ENCODE measurements at regions of chr6 and their contacts with region 1.

Region 1: DNA sequence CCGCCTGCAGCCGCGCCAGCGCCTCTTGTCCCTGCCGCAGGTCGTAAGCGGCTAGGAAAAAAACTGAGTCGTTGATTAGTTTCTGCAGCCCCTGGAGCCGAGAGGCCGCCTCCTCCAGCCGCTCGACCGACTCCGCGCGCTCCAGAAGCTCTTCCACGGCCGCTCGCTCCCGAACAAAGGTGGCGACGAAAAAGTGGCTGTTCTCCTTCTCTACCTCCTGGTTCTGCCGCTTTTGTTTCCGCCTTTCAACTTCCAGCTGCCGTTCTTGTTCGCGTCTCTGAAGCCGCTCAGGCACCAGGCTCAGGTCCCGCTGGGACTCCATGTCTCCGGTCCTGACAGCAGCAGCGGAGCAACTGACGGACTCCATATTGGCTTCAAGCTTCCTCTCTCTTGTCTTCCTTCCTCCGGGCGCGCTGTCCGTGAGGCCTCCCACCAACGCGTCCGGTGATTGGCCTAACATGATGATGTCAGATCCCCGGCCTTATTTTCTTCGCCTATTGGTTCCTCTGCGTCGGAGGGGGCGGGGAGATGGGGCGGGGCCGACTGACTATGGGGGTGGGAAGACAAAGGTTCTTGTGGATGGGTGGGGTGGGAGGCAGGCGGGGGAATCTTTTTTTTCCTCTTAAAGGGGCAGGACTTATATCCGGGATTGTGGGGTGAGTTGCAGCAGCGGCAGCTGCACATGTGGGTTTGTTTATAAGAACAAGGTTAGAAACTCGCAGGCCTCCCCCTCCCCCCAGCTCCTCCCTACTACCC is at the start of gene TBCC:
- DNase-seq: peak; percentile 87 to 98 (median 93)
- ATAC-seq: peak; percentile 82
- H3K4me3 ChIP-seq: peak within 1 kb of the TSS; percentile 76 to 84
- H3K4me3 Mint-ChIP-seq: peak within 1 kb of the TSS; percentile 100
- H3K27ac ChIP-seq: peak within 1 kb of the TSS; percentile 86 to 89
- H3K27ac Mint-ChIP-seq: peak within 1 kb of the TSS; percentile 100
- H3K4me1 ChIP-seq: peaks cover 36% of the 10 kb centered on the region
- H3K4me1 Mint-ChIP-seq: peaks cover 27% of the 10 kb centered on the region
- H3K27me3 ChIP-seq: no peaks in the 10 kb centered on the region
- H3K27me3 Mint-ChIP-seq: no peaks in the 10 kb centered on the region
- CTCF ChIP-seq: no peak
- total RNA-seq, gene TBCC: 70.5 to 74.1 TPM

Region 2: GRCh38 chr6:42692137-42692911 is 53.6 kb before region 1 on chr6:
- CTCF ChIA-PET with region 1: interaction called, 3 read pairs
- POLR2A ChIA-PET with region 1: interaction called, 10 read pairs
- intact Hi-C with region 1: no loop called
- DNase-seq: peak in 1 of 9 experiments; percentile 24
- ATAC-seq: peak; percentile 14
- H3K4me3 ChIP-seq: no peak overlapping the region
- H3K4me3 Mint-ChIP-seq: no peak overlapping the region
- H3K27ac ChIP-seq: peak overlapping the region in 1 of 2 experiments; percentile 38
- H3K27ac Mint-ChIP-seq: peak overlapping the region; percentile 91
- H3K4me1 ChIP-seq: peaks cover 39% of the 10 kb centered on the region
- H3K4me1 Mint-ChIP-seq: peaks cover 45% of the 10 kb centered on the region
- H3K27me3 ChIP-seq: no peaks in the 10 kb centered on the region
- H3K27me3 Mint-ChIP-seq: no peaks in the 10 kb centered on the region
- CTCF ChIP-seq: no peak

Region 3: DNA sequence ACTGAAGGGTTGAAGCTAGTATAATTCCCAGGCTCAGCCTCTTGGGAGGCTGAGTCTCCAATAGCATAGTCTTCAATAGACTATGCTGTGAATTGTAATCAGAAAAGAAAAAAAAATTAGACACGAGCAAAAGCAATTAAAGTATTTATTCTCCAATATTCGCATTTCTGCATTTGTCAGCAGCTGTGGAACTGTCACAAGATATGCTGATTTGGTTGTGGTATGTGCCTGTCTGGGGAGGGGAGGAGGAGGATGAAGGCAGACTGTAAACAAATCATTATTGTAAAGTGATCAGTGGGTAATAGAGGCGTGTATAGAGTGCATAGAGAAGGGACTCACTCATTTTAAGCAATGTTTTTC is 25.8 kb after region 1 on chr6:
- CTCF ChIA-PET with region 1: interaction called, 27 read pairs
- POLR2A ChIA-PET with region 1: interaction called, 312 read pairs
- intact Hi-C with region 1: loop called (anchors 1 kb)
- DNase-seq: peak in 5 of 9 experiments; percentile 34 to 83 (median 57)
- ATAC-seq: peak; percentile 21
- H3K4me3 ChIP-seq: peak overlapping the region; percentile 22 to 24
- H3K4me3 Mint-ChIP-seq: peak overlapping the region; percentile 70
- H3K27ac ChIP-seq: peak overlapping the region; percentile 81 to 98
- H3K27ac Mint-ChIP-seq: peak overlapping the region; percentile 100
- H3K4me1 ChIP-seq: peaks cover 67% of the 10 kb centered on the region
- H3K4me1 Mint-ChIP-seq: peaks cover 72% of the 10 kb centered on the region
- H3K27me3 ChIP-seq: no peaks in the 10 kb centered on the region
- H3K27me3 Mint-ChIP-seq: no peaks in the 10 kb centered on the region
- CTCF ChIP-seq: no peak

Region 4: DNA sequence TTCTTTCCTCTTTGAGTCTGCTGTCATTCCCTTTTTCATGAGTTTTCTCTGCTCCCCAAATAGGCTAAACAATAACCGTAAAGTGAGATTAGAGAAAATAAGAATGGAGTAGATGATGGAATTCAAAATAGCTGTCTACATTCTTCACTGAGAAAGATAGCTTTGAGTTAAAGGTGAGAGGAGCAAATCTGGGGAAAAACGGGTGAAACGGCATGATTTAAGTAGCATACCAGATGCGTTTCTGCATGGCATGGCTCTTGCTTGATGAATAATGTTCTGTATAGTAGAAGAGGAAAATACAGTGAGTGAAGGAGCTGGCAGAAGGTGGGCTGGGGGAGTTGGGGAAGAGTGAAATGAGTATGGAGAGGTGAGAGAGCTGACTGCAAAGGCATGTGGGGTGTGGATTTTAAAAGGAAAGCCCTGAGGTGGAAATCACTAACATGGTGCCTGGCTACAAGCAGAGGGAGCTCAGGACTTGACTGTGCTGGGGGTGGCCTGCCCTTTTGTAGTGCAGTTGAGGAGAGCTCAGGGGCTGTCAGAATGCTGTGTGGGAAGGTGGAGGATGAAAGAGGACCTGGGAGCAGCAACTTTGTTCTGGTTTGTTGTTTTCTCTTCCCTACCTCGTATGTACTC is 44.8 kb after region 1 on chr6:
- CTCF ChIA-PET with region 1: interaction called, 3 read pairs
- POLR2A ChIA-PET with region 1: interaction called, 372 read pairs
- intact Hi-C with region 1: no loop called
- DNase-seq: peak in 1 of 9 experiments; percentile 45
- ATAC-seq: no peak
- H3K4me3 ChIP-seq: no peak overlapping the region
- H3K4me3 Mint-ChIP-seq: peak overlapping the region; percentile 4
- H3K27ac ChIP-seq: peak overlapping the region; percentile 10 to 51
- H3K27ac Mint-ChIP-seq: peak overlapping the region; percentile 83
- H3K4me1 ChIP-seq: peaks cover 54% of the 10 kb centered on the region
- H3K4me1 Mint-ChIP-seq: peaks cover 39% of the 10 kb centered on the region
- H3K27me3 ChIP-seq: no peaks in the 10 kb centered on the region
- H3K27me3 Mint-ChIP-seq: no peaks in the 10 kb centered on the region
- CTCF ChIP-seq: no peak

Region 5: GRCh38 chr6:42928986-42929820 is 183.3 kb after region 1 on chr6 and contains the start of gene CNPY3:
- CTCF ChIA-PET with region 1: no interaction called
- POLR2A ChIA-PET with region 1: interaction called, 16 read pairs
- intact Hi-C with region 1: loop called (anchors 1 kb)
- DNase-seq: peak; percentile 91 to 98 (median 94)
- ATAC-seq: peak; percentile 77
- H3K4me3 ChIP-seq: peak within 1 kb of the TSS; percentile 70 to 82
- H3K4me3 Mint-ChIP-seq: peak within 1 kb of the TSS; percentile 99
- H3K27ac ChIP-seq: peak within 1 kb of the TSS; percentile 93 to 95
- H3K27ac Mint-ChIP-seq: peak within 1 kb of the TSS; percentile 98
- H3K4me1 ChIP-seq: peaks cover 43% of the 10 kb centered on the region
- H3K4me1 Mint-ChIP-seq: peaks cover 45% of the 10 kb centered on the region
- H3K27me3 ChIP-seq: no peaks in the 10 kb centered on the region
- H3K27me3 Mint-ChIP-seq: no peaks in the 10 kb centered on the region
- CTCF ChIP-seq: no peak
- total RNA-seq, gene CNPY3: 43.9 to 47.4 TPM

Region 6: GRCh38 chr6:43174263-43175112 is 428.6 kb after region 1 on chr6:
- CTCF ChIA-PET with region 1: no interaction called
- POLR2A ChIA-PET with region 1: no interaction called
- intact Hi-C with region 1: loop called in 1 of 2 experiments (anchors 2 kb)
- DNase-seq: peak; percentile 77 to 98 (median 92)
- ATAC-seq: peak; percentile 52
- H3K4me3 ChIP-seq: peak overlapping the region; percentile 4 to 50
- H3K4me3 Mint-ChIP-seq: peak overlapping the region; percentile 63
- H3K27ac ChIP-seq: peak overlapping the region; percentile 62 to 89
- H3K27ac Mint-ChIP-seq: peak overlapping the region; percentile 95
- H3K4me1 ChIP-seq: peaks cover 40% of the 10 kb centered on the region
- H3K4me1 Mint-ChIP-seq: peaks cover 45% of the 10 kb centered on the region
- H3K27me3 ChIP-seq: no peaks in the 10 kb centered on the region
- H3K27me3 Mint-ChIP-seq: no peaks in the 10 kb centered on the region
- CTCF ChIP-seq: no peak